HCT116 (cell line): ENCODE measurements at regions of chr16 and their contacts with region 1.

Region 1: GRCh38 chr16:50373780-50374179 is 5.0 kb upstream of the BRD7 start:
- DNase-seq: no peak
- ATAC-seq: no peak
- H3K4me3 ChIP-seq: no peak overlapping the region
- H3K27ac ChIP-seq: no peak overlapping the region
- H3K4me1 ChIP-seq: peaks cover 3 to 24% of the 10 kb centered on the region in 2 experiments; a peak in 3 of 4 replicates
- H3K27me3 ChIP-seq: no peaks in the 10 kb centered on the region
- CTCF ChIP-seq: no peak
- POLR2A ChIP-seq: no peak
- RAD21 ChIP-seq: no peak

Region 2: GRCh38 chr16:50509521-50510341 is 136.0 kb after region 1 on chr16:
- CTCF ChIA-PET with region 1: interaction called, 8 read pairs
- POLR2A ChIA-PET with region 1: no interaction called
- RAD21 ChIA-PET with region 1: no interaction called
- intact Hi-C with region 1: loop called (anchors 1 kb)
- DNase-seq: peak; percentile 40
- ATAC-seq: peak; percentile 68
- H3K4me3 ChIP-seq: no peak overlapping the region
- H3K27ac ChIP-seq: no peak overlapping the region
- H3K4me1 ChIP-seq: peaks cover 0 to 2% of the 10 kb centered on the region in 2 experiments; a peak in 3 of 4 replicates
- H3K27me3 ChIP-seq: no peaks in the 10 kb centered on the region
- CTCF ChIP-seq: peak; percentile 67 to 97 (median 90)
- POLR2A ChIP-seq: no peak
- RAD21 ChIP-seq: peak; percentile 84

Region 3: DNA sequence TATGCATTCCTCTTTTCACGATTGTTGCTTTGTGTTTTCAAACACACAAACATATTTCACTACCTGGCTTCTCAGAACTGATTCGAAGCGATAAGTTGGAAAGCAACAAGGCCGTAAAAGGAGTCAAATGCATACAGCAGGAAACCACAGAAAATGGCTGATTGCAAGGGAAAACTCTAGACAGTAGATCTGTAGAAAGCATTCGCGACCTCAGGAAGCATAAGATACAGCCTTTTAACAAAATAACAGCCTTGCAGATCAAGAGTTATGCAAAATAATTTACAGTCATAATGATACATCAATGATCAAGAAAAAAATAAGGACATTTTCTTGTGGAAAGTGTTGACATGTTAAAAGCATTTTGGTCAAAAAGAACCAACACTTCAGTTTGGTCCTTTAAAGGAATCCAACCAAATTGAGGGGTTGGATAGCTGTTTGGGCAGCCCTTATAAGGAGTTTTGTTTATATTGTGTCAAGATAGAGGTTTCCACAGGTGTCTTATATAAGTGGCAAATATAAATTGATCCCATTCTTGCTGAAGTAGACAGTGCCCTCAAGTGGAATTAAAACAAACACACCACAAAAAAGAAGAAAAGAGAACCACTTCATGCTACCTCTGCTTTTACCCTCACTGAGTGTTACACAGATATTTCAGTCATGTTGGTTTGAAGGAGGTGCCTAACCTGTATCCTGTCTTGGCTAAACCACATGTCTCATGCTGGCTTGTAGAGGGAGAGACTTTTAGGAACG is 373.6 kb after region 1 on chr16:
- CTCF ChIA-PET with region 1: no interaction called
- POLR2A ChIA-PET with region 1: no interaction called
- RAD21 ChIA-PET with region 1: no interaction called
- intact Hi-C with region 1: loop called (anchors 2 kb)
- DNase-seq: peak; percentile 15
- ATAC-seq: peak; percentile 65
- H3K4me3 ChIP-seq: no peak overlapping the region
- H3K27ac ChIP-seq: no peak overlapping the region
- H3K4me1 ChIP-seq: peaks cover 0 to 7% of the 10 kb centered on the region in 2 experiments; a peak in 1 of 4 replicates
- H3K27me3 ChIP-seq: no peaks in the 10 kb centered on the region
- CTCF ChIP-seq: peak in 2 of 3 experiments; percentile 32 to 52; a peak in 3 of 6 replicates
- POLR2A ChIP-seq: no peak
- RAD21 ChIP-seq: peak; percentile 61